ENCODE measurements at regions of chr7 and their contacts with region 1.

Region 1: DNA sequence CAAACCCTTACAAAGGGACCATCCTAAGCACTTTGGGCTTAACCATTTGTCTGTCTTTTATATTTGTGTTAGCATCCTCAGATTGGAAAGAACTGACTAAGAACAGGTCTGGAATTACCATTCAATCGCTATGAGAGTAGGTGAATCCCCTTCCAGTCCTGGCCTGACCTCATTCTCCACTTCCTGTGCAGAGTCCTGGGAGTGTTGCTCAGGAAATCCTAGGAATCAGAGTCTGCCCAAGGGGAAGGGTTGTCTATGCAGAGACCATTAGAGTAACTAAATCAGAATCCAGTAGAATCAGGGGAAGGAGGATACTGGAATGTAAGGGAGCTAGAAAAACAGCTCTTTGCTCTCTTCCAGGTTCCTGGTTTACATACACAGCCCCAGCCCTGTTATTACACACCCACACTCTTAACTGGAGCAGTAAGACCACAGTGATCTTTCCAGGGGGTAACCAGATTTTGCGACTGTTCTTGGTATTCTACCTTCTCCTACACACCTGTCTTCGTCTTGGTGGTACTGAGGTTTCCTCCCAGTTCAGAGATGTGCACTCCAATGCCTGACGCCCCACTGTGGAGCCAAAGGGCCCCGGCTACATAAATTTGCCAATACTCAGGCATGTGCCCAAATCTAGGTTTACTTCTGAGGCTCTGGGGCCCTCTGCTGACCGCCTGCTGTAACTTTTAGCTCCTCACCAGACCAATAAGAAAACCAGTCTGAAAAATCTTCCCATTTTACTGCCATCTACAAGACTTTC is 103.7 kb downstream of the RNF216 start:
- DNase-seq: peak in 2 of 4 donors; percentile 69 to 85
- ATAC-seq: peak; percentile 78
- H3K4me3 ChIP-seq: no peak overlapping the region
- H3K27ac ChIP-seq: peak overlapping the region in 1 of 2 donors; percentile 6
- H3K4me1 ChIP-seq: peaks cover under 1 to 58% of the 10 kb centered on the region in 2 donors
- H3K27me3 ChIP-seq: no peaks in the 10 kb centered on the region
- CTCF ChIP-seq: peak; percentile 51 to 53

Region 2: GRCh38 chr7:5494683-5495561 is 182.8 kb before region 1 on chr7:
- intact Hi-C with region 1: loop called in 1 of 2 experiments (anchors 10 kb)
- DNase-seq: peak; percentile 61 to 93 (median 80)
- ATAC-seq: peak; percentile 88
- H3K4me3 ChIP-seq: peak overlapping the region in 1 of 2 donors; percentile 14
- H3K27ac ChIP-seq: no peak overlapping the region
- H3K4me1 ChIP-seq: peaks cover 4 to 39% of the 10 kb centered on the region in 2 donors
- H3K27me3 ChIP-seq: no peaks in the 10 kb centered on the region
- CTCF ChIP-seq: peak; percentile 92 to 96

Region 3: GRCh38 chr7:5646852-5647251 is 30.9 kb before region 1 on chr7:
- intact Hi-C with region 1: no loop called
- DNase-seq: no peak
- ATAC-seq: peak; percentile 19
- H3K4me3 ChIP-seq: no peak overlapping the region
- H3K27ac ChIP-seq: no peak overlapping the region
- H3K4me1 ChIP-seq: peaks cover 0 to 19% of the 10 kb centered on the region in 2 donors
- H3K27me3 ChIP-seq: no peaks in the 10 kb centered on the region
- CTCF ChIP-seq: no peak